ENCODE measurements at regions of chr16 and their contacts with region 1.

Region 1: DNA sequence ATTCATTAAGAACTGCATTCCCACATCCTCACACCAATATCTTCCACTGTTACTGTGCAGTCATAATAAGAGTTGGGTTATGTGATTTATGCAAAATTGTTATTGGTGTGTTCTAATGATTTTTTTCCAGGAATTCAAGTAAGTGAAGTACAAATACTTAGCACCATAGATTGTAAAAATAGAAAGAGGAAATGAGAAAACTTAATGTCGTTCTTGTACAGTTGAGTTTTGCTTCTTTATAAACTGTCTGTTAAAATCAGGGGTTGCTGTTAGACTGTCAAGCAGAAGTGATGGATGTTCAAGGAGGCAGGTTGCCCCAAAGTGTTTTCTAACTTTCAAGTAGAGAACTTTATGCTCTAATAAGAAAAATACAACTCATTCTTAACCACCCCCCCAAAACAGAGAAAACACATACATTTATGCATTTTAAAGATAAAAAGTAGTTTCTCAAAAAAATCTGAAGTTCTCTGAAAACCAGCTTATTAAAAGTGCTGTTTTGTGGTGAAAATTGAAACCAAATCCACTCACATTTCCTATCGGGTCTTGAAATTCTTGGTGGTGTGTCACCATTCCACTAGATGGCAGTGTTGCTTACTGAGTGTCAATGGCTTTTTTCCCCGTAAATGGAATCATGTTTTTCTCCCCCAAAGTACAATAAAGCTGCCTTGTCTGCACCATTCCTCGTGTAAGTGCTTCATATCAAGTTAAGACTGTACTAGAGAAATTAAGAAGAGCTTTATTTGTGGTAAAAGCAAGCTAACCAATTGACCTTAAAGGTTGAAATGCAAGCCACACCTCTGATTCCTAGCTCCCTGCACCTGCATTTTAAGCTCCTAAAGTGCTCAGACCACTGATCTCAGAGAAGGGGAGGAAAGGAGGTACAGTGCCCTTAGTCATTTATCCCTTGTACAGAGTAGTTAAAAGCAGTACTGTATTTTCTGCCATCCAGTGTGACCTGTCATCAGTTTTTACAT is 4.7 kb upstream of the IGSF6 start:
- DNase-seq: no peak
- H3K4me3 ChIP-seq: no peak overlapping the region
- H3K27ac ChIP-seq: no peak overlapping the region
- H3K4me1 ChIP-seq: no peaks in the 10 kb centered on the region
- H3K27me3 ChIP-seq: no peaks in the 10 kb centered on the region
- CTCF ChIP-seq: peak; percentile 59 to 80

Region 2: DNA sequence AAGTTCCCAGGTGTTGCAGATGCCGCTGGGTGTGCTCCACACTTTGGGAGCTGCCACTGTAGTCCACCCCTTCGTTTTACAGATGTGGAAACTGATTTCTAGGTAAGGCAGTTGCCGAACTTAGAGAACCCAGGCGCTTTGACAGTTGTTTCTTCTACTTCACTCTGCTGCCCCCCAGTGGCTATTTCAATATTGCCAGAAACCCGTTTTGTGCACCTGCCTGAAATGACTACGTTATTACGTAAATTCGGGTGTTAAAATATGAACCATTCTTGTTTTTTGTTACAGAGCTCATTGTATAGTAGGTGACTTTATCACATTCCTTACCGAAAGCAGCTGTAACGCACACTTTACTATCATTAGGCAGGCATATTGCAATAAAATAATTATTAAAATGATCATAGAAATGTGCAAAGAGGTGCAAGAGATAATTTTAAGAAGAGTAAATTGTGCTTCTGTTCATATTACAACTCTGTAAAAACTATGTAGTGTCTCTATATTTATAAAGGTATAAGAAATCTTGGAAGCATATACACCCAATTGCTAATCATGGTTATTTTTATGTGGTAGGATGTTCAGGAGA is 51.5 kb after region 1 on chr16:
- intact Hi-C with region 1: loop called (anchors 5 kb)
- DNase-seq: peak; percentile 71 to 86
- H3K4me3 ChIP-seq: no peak overlapping the region
- H3K27ac ChIP-seq: no peak overlapping the region
- H3K4me1 ChIP-seq: peaks cover 0 to 9% (median 1%) of the 10 kb centered on the region in 4 donors
- H3K27me3 ChIP-seq: no peaks in the 10 kb centered on the region
- CTCF ChIP-seq: peak; percentile 71 to 74

Region 3: GRCh38 chr16:22123146-22123545 is 466.1 kb after region 1 on chr16:
- intact Hi-C with region 1: no loop called
- DNase-seq: peak in 1 of 2 donors; percentile 23
- H3K4me3 ChIP-seq: no peak overlapping the region
- H3K27ac ChIP-seq: no peak overlapping the region
- H3K4me1 ChIP-seq: no peaks in the 10 kb centered on the region
- H3K27me3 ChIP-seq: no peaks in the 10 kb centered on the region
- CTCF ChIP-seq: no peak

Measured in tibial artery (tissue), 4 donors.